ENCODE measurements at regions of chr2 and their contacts with region 1.

Region 1: DNA sequence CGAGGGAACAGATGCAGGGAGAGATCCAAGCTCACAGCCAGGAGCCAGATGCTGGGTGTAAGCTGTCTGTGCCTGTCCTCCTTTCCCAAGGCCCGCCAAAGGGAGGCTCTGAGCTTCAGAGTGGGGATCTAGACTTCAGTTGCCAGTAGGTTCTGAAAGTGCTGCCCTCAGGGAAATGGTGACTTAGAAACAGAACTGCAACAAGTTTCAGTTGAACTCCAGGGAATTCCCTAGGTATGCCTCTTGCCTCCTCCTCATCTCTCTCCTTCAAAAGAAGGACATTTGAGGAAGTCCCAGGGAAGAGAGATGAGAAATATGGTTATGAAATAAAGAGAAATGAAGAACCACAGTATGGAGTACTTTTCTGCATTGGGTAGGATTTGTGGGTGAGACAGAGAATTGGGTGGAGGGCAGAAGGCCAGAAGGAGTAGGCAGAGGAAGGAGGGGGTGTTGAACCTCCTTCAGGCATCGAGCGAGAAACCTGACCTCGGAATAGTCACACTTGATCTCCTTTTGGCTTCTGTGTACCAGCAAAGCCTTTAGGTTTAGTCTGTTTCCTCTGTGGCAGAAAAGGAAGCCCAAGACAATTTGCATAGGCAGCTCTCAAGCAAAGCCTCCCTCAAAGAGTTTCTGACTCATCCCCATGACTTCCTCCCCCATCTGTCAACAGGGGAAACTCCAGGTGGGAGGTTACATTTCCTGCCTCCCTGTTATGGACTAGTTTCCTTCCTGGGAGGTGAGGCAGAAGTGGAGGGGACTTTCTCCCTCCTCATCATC is 45.7 kb downstream of the QPCT start:
- DNase-seq: no peak
- H3K4me3 ChIP-seq: no peak overlapping the region
- H3K27ac ChIP-seq: peak overlapping the region in 1 of 2 experiments; percentile 68; a peak in 2 of 4 replicates
- H3K4me1 ChIP-seq: peaks cover 6 to 32% of the 10 kb centered on the region in 2 experiments; a peak in 3 of 4 replicates
- H3K27me3 ChIP-seq: no peaks in the 10 kb centered on the region
- CTCF ChIP-seq: no peak
- EP300 ChIP-seq: peak in 1 of 2 experiments; percentile 62; a peak in 1 of 4 replicates
- RAD21 ChIP-seq: no peak

Region 2: GRCh38 chr2:37287966-37288365 is 102.2 kb before region 1 on chr2:
- CTCF ChIA-PET with region 1: interaction called, 33 read pairs
- POLR2A ChIA-PET with region 1: no interaction called
- DNase-seq: peak; percentile 46
- H3K4me3 ChIP-seq: no peak overlapping the region
- H3K27ac ChIP-seq: peak overlapping the region in 1 of 2 experiments; percentile 51; a peak in 1 of 4 replicates
- H3K4me1 ChIP-seq: peaks cover 8 to 11% of the 10 kb centered on the region in 2 experiments
- H3K27me3 ChIP-seq: no peaks in the 10 kb centered on the region
- CTCF ChIP-seq: peak; percentile 43
- EP300 ChIP-seq: no peak
- RAD21 ChIP-seq: peak; percentile 86

Region 3: DNA sequence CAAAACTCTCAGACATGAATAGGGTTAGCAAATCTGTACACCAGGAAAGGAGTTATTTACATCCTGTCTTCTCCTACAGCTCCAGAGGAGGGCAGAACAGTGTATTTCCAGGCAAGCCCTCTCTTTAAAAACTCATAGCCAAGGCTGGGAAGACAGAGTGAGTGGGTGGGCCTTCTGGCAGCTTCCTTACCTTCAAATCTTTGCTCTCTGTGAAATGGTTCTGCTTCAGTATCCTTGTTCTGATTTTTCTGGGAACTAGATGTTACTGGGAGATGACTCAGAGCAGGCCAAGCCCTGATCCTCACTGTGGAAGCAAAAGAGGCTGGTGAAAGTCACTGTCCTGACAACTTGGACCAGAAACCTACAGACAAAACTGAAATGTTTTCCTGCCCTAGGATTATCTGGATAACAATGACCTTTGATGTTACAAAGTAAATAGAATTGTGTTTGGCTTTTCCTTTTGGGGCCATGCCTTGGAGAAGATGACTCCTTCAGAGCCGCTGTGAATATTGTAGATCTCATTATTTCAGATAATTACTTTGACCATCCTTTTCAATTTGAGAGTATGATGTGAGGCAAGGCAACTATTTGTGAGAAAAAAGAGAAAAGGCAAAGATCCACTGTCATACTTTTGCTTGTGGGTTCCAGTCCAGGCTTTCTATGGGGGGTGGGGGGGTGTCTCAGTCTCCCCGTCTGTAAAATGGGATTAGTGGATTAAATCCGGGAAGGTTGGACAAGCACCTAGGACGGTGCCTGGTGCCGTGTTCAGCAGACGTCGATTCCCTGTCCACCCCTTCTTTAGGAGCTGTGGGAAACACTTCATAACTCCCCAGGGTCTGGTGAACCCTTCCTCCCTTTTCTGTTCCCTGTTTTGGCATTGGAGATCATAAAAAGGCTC is 46.4 kb before region 1 on chr2:
- CTCF ChIA-PET with region 1: interaction called, 16 read pairs
- POLR2A ChIA-PET with region 1: no interaction called
- DNase-seq: peak; percentile 56
- H3K4me3 ChIP-seq: no peak overlapping the region; a peak in 1 of 4 replicates
- H3K27ac ChIP-seq: peak overlapping the region; percentile 36 to 39; a peak in 3 of 4 replicates
- H3K4me1 ChIP-seq: peaks cover 8% of the 10 kb centered on the region in 2 experiments; a peak in 2 of 4 replicates
- H3K27me3 ChIP-seq: no peaks in the 10 kb centered on the region
- CTCF ChIP-seq: peak; percentile 53
- EP300 ChIP-seq: no peak
- RAD21 ChIP-seq: peak; percentile 38

Region 4: DNA sequence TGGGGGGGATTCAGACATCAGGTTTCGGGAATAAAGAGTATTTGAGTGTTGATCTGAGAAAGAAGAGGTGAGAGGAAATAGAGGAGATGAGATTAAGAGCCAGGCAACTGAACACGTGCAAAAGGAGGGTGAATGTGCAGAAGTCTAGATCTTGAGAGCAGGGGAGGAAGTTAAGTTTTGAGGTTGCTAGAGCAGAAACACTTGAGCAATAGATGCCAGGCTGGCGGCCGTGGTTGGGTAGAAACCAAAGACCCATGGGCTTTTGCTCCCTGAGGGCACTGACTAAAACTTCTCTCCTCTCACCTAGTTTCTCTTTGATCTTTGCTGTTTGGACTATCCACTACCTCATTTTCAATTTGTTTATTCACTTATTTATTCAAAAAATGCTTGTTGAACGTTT is 165.3 kb after region 1 on chr2:
- CTCF ChIA-PET with region 1: interaction called, 10 read pairs
- POLR2A ChIA-PET with region 1: no interaction called
- DNase-seq: no peak
- H3K4me3 ChIP-seq: no peak overlapping the region
- H3K27ac ChIP-seq: peak overlapping the region in 1 of 2 experiments; percentile 99; a peak in 2 of 4 replicates
- H3K4me1 ChIP-seq: peaks cover under 1 to 42% of the 10 kb centered on the region in 2 experiments; a peak in 3 of 4 replicates
- H3K27me3 ChIP-seq: no peaks in the 10 kb centered on the region
- CTCF ChIP-seq: no peak
- EP300 ChIP-seq: no peak
- RAD21 ChIP-seq: no peak

Region 5: GRCh38 chr2:37851828-37852584 is 461.8 kb after region 1 on chr2:
- CTCF ChIA-PET with region 1: interaction called, 33 read pairs
- POLR2A ChIA-PET with region 1: no interaction called
- DNase-seq: no peak
- H3K4me3 ChIP-seq: no peak overlapping the region
- H3K27ac ChIP-seq: peak overlapping the region in 1 of 2 experiments; percentile 80; a peak in 3 of 4 replicates
- H3K4me1 ChIP-seq: peaks cover 14 to 47% of the 10 kb centered on the region in 2 experiments; a peak in 3 of 4 replicates
- H3K27me3 ChIP-seq: no peaks in the 10 kb centered on the region
- CTCF ChIP-seq: no peak
- EP300 ChIP-seq: no peak
- RAD21 ChIP-seq: no peak

Region 6: GRCh38 chr2:37896314-37896713 is 506.1 kb after region 1 on chr2:
- CTCF ChIA-PET with region 1: interaction called, 546 read pairs
- POLR2A ChIA-PET with region 1: no interaction called
- DNase-seq: peak; percentile 33
- H3K4me3 ChIP-seq: no peak overlapping the region
- H3K27ac ChIP-seq: no peak overlapping the region; a peak in 1 of 4 replicates
- H3K4me1 ChIP-seq: peaks cover 6% of the 10 kb centered on the region in 2 experiments; a peak in 3 of 4 replicates
- H3K27me3 ChIP-seq: no peaks in the 10 kb centered on the region
- CTCF ChIP-seq: peak; percentile 29; the same call in 1 of the 2 replicates
- EP300 ChIP-seq: no peak
- RAD21 ChIP-seq: peak; percentile 66

Region 7: DNA sequence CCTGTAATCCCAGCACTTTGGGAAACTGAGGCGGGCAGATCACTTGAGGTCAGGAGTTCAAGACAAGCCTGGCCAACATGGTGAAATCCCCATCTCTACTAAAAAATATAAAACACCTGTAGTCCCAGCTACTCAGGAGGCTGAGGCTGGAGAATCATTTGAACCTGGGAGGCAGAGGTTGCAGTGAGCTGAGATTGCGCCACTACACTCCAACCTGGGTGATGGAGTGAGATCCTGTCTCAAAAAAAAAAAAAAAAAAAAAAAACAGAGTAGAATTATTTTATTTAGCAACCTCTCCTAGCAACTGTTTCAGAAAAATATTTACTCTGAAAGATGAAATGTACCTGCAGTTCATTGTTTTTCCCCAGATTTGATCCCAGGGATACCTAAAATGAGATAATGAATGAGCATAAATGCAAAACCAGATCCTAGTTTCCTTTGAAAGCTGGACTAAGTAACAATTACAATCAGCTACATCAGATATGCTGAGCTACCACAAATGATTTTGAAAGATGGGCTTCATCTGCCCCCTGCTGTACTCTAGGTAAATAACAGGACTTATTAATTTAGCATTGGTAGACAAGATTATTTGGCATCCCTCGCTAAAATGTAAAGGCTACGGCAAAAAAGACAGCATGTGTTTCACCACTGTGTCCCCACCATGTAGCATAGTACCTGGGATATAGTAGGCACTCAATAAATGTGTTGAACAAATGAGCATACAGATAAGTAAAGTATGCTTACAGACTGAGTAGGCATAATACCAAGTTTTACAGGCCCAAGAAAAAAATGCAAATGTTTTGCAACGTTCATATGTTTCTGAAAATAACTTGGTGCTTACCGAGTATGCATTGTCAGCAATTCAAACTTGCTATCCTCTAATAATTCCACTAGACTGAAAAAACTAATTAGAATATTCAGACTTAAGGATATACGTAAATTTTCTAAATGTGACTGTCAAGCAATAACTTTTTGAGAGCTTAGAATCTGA is 884.4 kb after region 1 on chr2:
- CTCF ChIA-PET with region 1: interaction called, 24 read pairs
- POLR2A ChIA-PET with region 1: no interaction called
- DNase-seq: peak; percentile 81
- H3K4me3 ChIP-seq: no peak overlapping the region
- H3K27ac ChIP-seq: 0 out of 4 replicates have a peak overlapping the region, but pooled peaks of 1 of the 2 experiments have one; percentile 18
- H3K4me1 ChIP-seq: no peaks in the 10 kb centered on the region; a peak in 1 of 4 replicates
- H3K27me3 ChIP-seq: no peaks in the 10 kb centered on the region
- CTCF ChIP-seq: peak; percentile 86
- EP300 ChIP-seq: peak in 1 of 2 experiments; percentile 50; a peak in 1 of 4 replicates
- RAD21 ChIP-seq: peak; percentile 100

Measured in SK-N-SH (cell line).